Aorta (tissue), 5 donors: ENCODE measurements at regions of chr17 and their contacts with region 1.

Region 1: DNA sequence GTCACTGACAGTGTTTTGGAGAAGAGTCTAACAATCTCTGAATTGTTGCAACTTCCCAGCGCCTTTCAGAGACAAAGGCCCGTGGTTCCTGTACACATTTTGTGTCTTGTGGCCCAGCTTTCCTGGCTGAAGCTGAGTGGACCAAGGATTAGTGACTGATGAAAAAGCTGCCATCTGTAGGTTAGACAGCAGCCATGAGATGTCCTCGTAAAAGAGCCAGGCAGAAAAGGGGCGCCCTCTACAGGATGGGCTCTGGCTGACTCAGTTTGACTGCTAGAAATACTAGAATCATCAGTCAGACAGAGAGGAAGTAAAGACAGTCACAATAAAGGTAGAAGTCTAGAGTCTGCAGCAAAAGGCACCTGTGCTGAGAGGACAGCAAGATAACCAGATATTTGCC is 26.5 kb upstream of the NF1 start:
- DNase-seq: peak in 1 of 2 donors; percentile 61
- ATAC-seq: no peak
- H3K4me3 ChIP-seq: no peak overlapping the region
- H3K27ac ChIP-seq: no peak overlapping the region
- H3K4me1 ChIP-seq: no peaks in the 10 kb centered on the region
- H3K27me3 ChIP-seq: no peaks in the 10 kb centered on the region

Region 2: DNA sequence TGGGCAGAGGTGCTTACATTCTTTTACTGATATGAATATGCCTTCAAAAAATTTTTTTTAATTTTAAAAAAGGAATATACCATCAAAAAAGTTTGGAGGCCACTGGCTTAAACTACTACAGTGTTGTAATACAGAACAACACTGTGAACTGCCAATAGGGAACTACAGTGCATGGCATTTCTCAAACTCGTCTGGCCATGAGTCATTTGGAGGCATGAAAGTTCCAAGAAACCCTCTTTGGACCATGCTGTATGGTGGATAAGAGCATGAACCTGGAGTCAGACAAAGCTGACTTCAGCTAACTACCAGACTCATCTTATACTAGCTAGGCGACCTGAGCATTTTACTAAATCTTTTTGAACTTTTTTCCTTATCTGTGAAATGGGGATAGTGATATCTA is 17.3 kb after region 1 on chr17:
- intact Hi-C with region 1: no loop called
- DNase-seq: no peak
- ATAC-seq: no peak
- H3K4me3 ChIP-seq: no peak overlapping the region
- H3K27ac ChIP-seq: no peak overlapping the region
- H3K4me1 ChIP-seq: peaks cover 0 to 1% of the 10 kb centered on the region in 2 donors
- H3K27me3 ChIP-seq: no peaks in the 10 kb centered on the region

Region 3: DNA sequence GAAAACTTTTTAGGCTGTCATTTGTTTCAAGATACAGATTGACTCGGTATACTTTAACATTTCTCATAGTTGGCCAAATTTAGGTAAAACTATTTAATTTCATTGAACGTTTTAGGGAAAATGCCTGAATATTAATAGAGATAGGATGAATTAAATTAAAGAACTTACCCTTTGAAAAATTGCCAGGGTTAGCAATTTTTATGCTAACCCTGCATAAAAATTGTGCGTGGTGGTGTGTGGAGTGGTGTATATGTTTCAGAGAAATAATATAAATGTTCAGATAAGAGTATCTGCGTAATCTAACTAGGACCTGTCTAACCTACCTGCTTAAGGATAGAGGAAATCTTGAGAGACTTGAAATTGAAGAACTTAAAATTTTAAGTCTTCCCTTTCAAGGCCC is 47.9 kb after region 1 on chr17:
- intact Hi-C with region 1: loop called in 1 of 2 experiments (anchors 2 kb)
- DNase-seq: no peak
- ATAC-seq: no peak
- H3K4me3 ChIP-seq: no peak overlapping the region
- H3K27ac ChIP-seq: no peak overlapping the region
- H3K4me1 ChIP-seq: no peaks in the 10 kb centered on the region
- H3K27me3 ChIP-seq: no peaks in the 10 kb centered on the region